Naive thymus-derived CD4-positive, alpha-beta T cell (primary cell): ENCODE measurements at regions of chr3 and their contacts with region 1.

Region 1: GRCh38 chr3:47781685-47782445 is at the start of gene SMARCC1:
- DNase-seq: peak; percentile 95 to 99 (median 97)
- ATAC-seq: peak; percentile 95
- H3K4me3 ChIP-seq: peak within 1 kb of the TSS; percentile 65
- H3K4me3 Mint-ChIP-seq: peak within 1 kb of the TSS; percentile 87 to 98 (median 94)
- H3K27ac ChIP-seq: peak within 1 kb of the TSS; percentile 99
- H3K27ac Mint-ChIP-seq: peak within 1 kb of the TSS; percentile 93 to 100 (median 98)
- H3K4me1 ChIP-seq: peaks cover 18 to 21% of the 10 kb centered on the region in 2 donors
- H3K4me1 Mint-ChIP-seq: peaks cover 18 to 30% (median 23%) of the 10 kb centered on the region in 7 donors
- H3K27me3 ChIP-seq: no peaks in the 10 kb centered on the region
- H3K27me3 Mint-ChIP-seq: peaks cover 0 to 3% (median 0%) of the 10 kb centered on the region in 5 donors
- total RNA-seq, gene SMARCC1: 92.2 to 125 (median 99.1) TPM

Region 2: GRCh38 chr3:47164007-47164881 is 617.6 kb before region 1 on chr3 and contains the start of gene SETD2:
- CTCF ChIA-PET with region 1: no interaction called
- POLR2A ChIA-PET with region 1: no interaction called
- intact Hi-C with region 1: loop called in 1 of 2 experiments (anchors 5 kb)
- DNase-seq: peak; percentile 67 to 86 (median 82)
- ATAC-seq: peak; percentile 92
- H3K4me3 ChIP-seq: peak within 1 kb of the TSS; percentile 77
- H3K4me3 Mint-ChIP-seq: peak within 1 kb of the TSS; percentile 90 to 99 (median 98)
- H3K27ac ChIP-seq: peak within 1 kb of the TSS; percentile 96
- H3K27ac Mint-ChIP-seq: peak within 1 kb of the TSS; percentile 94 to 99 (median 99)
- H3K4me1 ChIP-seq: peaks cover 30 to 36% of the 10 kb centered on the region in 2 donors
- H3K4me1 Mint-ChIP-seq: peaks cover 34 to 68% (median 56%) of the 10 kb centered on the region in 7 donors
- H3K27me3 ChIP-seq: no peaks in the 10 kb centered on the region
- H3K27me3 Mint-ChIP-seq: no peaks in the 10 kb centered on the region
- total RNA-seq, gene SETD2: 49.2 to 77.3 (median 71.1) TPM

Region 3: GRCh38 chr3:47380601-47381316 is 401.1 kb before region 1 on chr3 and contains the start of gene PTPN23:
- CTCF ChIA-PET with region 1: no interaction called
- POLR2A ChIA-PET with region 1: interaction called, 3 read pairs
- intact Hi-C with region 1: loop called (anchors 1 kb)
- DNase-seq: peak; percentile 96 to 99 (median 99)
- ATAC-seq: peak; percentile 82
- H3K4me3 ChIP-seq: peak within 1 kb of the TSS; percentile 86
- H3K4me3 Mint-ChIP-seq: peak within 1 kb of the TSS; percentile 90 to 100 (median 98)
- H3K27ac ChIP-seq: peak within 1 kb of the TSS; percentile 92
- H3K27ac Mint-ChIP-seq: peak within 1 kb of the TSS; percentile 92 to 100 (median 99)
- H3K4me1 ChIP-seq: peaks cover 23 to 26% of the 10 kb centered on the region in 2 donors
- H3K4me1 Mint-ChIP-seq: peaks cover 40 to 56% (median 48%) of the 10 kb centered on the region in 7 donors
- H3K27me3 ChIP-seq: no peaks in the 10 kb centered on the region
- H3K27me3 Mint-ChIP-seq: peaks cover 0 to 2% (median 0%) of the 10 kb centered on the region in 5 donors
- total RNA-seq, gene PTPN23: 35.8 to 51.2 (median 38.5) TPM

Region 4: DNA sequence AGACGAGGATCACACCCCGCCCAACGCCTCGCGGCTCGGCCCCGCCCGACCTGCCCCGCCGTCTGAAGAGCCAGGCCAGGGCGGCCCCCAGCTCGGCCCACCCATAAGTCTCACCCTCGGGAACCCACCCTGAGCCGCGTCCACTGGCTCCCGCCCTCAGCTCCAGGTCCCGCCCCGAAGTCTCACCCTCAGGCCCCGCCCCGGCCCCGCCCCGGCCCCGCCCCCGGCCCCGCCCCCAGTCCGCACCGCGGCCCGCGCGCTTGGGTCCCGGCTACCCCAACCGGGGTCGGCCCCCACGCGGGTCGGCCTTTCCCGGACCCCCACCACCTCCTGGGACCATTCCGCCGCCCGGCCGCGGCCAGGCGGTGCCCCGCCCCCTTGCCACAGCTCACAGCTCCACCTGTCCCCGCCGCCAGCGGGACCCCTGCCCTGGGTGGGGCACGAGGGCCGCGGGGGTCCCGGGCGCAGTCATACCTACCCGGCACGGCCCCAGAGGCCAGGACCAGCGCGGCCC is 203.7 kb before region 1 on chr3:
- CTCF ChIA-PET with region 1: no interaction called
- POLR2A ChIA-PET with region 1: no interaction called
- intact Hi-C with region 1: loop called in 1 of 2 experiments (anchors 5 kb)
- DNase-seq: peak in 8 of 9 donors; percentile 16 to 62 (median 28)
- ATAC-seq: peak; percentile 80
- H3K4me3 ChIP-seq: peak overlapping the region; percentile 41
- H3K4me3 Mint-ChIP-seq: peak overlapping the region in 9 of 10 donors; percentile 30 to 80 (median 67)
- H3K27ac ChIP-seq: no peak overlapping the region
- H3K27ac Mint-ChIP-seq: no peak overlapping the region
- H3K4me1 ChIP-seq: peaks cover 0 to 5% of the 10 kb centered on the region in 2 donors
- H3K4me1 Mint-ChIP-seq: peaks cover 0 to 9% (median 0%) of the 10 kb centered on the region in 7 donors
- H3K27me3 ChIP-seq: peaks cover 3 to 9% of the 10 kb centered on the region in 2 donors
- H3K27me3 Mint-ChIP-seq: peaks cover 13 to 57% (median 21%) of the 10 kb centered on the region in 5 donors

Region 5: GRCh38 chr3:47715928-47716327 is 65.9 kb before region 1 on chr3:
- CTCF ChIA-PET with region 1: no interaction called
- POLR2A ChIA-PET with region 1: no interaction called
- intact Hi-C with region 1: loop called in 1 of 2 experiments (anchors 5 kb)
- DNase-seq: no peak
- ATAC-seq: no peak
- H3K4me3 ChIP-seq: no peak overlapping the region
- H3K4me3 Mint-ChIP-seq: no peak overlapping the region
- H3K27ac ChIP-seq: no peak overlapping the region
- H3K27ac Mint-ChIP-seq: peak overlapping the region in 3 of 9 donors; percentile 0 to 29 (median 12)
- H3K4me1 ChIP-seq: no peaks in the 10 kb centered on the region
- H3K4me1 Mint-ChIP-seq: peaks cover 0 to 20% (median 5%) of the 10 kb centered on the region in 7 donors
- H3K27me3 ChIP-seq: no peaks in the 10 kb centered on the region
- H3K27me3 Mint-ChIP-seq: no peaks in the 10 kb centered on the region

Region 6: DNA sequence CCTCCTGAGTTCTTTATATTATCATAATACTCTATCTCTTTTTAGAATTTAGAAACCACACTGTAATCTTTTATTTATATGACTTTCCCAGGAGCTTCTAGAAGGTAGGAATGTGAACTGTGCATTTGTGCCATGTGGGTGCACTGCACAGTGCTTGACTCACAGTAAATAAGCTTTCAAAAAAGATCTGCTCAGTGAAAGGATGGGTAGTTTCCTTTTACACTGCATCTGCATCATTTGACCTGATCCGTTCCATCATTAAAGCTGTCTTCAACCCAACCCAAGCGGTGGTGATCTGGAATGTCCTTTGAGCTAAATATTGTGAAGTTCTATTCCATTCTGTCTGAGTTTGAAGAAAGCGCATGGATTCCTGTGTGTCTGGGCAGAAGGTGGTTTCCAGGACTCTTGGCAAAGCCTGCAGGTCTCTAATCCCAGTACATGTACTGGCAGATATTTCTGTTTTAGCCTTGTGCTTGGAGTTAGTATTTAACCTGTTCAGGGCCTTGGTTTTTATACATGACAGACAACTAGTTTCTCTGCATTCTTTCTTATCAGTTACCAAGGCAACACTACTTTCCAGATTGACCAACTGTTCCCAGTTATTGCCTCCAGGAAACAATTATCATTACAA is 117.7 kb after region 1 on chr3:
- CTCF ChIA-PET with region 1: no interaction called
- POLR2A ChIA-PET with region 1: no interaction called
- intact Hi-C with region 1: no loop called
- DNase-seq: no peak
- ATAC-seq: no peak
- H3K4me3 ChIP-seq: no peak overlapping the region
- H3K4me3 Mint-ChIP-seq: no peak overlapping the region
- H3K27ac ChIP-seq: no peak overlapping the region
- H3K27ac Mint-ChIP-seq: peak overlapping the region in 1 of 9 donors; percentile 18
- H3K4me1 ChIP-seq: no peaks in the 10 kb centered on the region
- H3K4me1 Mint-ChIP-seq: peaks cover 8 to 31% (median 16%) of the 10 kb centered on the region in 7 donors
- H3K27me3 ChIP-seq: no peaks in the 10 kb centered on the region
- H3K27me3 Mint-ChIP-seq: no peaks in the 10 kb centered on the region

Region 7: GRCh38 chr3:48088749-48089466 is 307.0 kb after region 1 on chr3:
- CTCF ChIA-PET with region 1: no interaction called
- POLR2A ChIA-PET with region 1: no interaction called
- intact Hi-C with region 1: loop called in 1 of 2 experiments (anchors 5 kb)
- DNase-seq: peak; percentile 89 to 96 (median 94)
- ATAC-seq: peak; percentile 97
- H3K4me3 ChIP-seq: peak overlapping the region; percentile 85
- H3K4me3 Mint-ChIP-seq: peak overlapping the region; percentile 90 to 99 (median 96)
- H3K27ac ChIP-seq: peak overlapping the region; percentile 95
- H3K27ac Mint-ChIP-seq: peak overlapping the region; percentile 71 to 99 (median 98)
- H3K4me1 ChIP-seq: peaks cover 7 to 11% of the 10 kb centered on the region in 2 donors
- H3K4me1 Mint-ChIP-seq: peaks cover 14 to 33% (median 29%) of the 10 kb centered on the region in 7 donors
- H3K27me3 ChIP-seq: no peaks in the 10 kb centered on the region
- H3K27me3 Mint-ChIP-seq: peaks cover 0 to 18% (median 0%) of the 10 kb centered on the region in 5 donors